PC-9 (cell line): ENCODE measurements at regions of chr12 and their contacts with region 1.

Region 1: DNA sequence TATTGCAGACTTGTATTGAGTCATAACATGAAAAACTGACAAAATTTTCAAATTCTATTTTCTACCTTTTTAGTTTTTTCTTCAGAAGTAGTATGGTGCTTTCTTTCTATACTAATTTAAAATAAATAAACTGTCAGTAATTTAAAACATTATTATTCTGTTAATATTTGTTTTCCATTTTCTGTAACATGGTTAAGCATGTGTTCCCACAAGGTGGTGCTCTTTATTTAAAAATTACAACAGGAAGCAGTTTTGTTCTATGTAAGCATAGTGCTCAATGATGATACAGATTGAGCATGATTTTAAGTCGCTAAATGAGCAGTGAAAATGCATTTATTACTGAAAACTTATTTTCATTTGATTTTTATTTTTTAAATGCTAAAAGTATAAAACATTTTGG is 114.6 kb downstream of the PPFIA2 start:
- DNase-seq: peak in 1 of 2 experiments; percentile 39
- H3K4me3 ChIP-seq: no peak overlapping the region
- H3K27ac ChIP-seq: no peak overlapping the region
- H3K4me1 ChIP-seq: no peaks in the 10 kb centered on the region
- H3K27me3 ChIP-seq: no peaks in the 10 kb centered on the region
- CTCF ChIP-seq: peak; percentile 71

Region 2: GRCh38 chr12:82326905-82327503 is 682.5 kb after region 1 on chr12:
- CTCF ChIA-PET with region 1: no interaction called
- POLR2A ChIA-PET with region 1: no interaction called
- intact Hi-C with region 1: loop called (anchors 1 kb)
- DNase-seq: peak in 1 of 2 experiments; percentile 36
- H3K4me3 ChIP-seq: no peak overlapping the region
- H3K27ac ChIP-seq: no peak overlapping the region
- H3K4me1 ChIP-seq: no peaks in the 10 kb centered on the region
- H3K27me3 ChIP-seq: no peaks in the 10 kb centered on the region
- CTCF ChIP-seq: peak; percentile 76